Kidney (tissue), 22 donors: ENCODE measurements at regions of chr12 and their contacts with region 1.

Region 1: DNA sequence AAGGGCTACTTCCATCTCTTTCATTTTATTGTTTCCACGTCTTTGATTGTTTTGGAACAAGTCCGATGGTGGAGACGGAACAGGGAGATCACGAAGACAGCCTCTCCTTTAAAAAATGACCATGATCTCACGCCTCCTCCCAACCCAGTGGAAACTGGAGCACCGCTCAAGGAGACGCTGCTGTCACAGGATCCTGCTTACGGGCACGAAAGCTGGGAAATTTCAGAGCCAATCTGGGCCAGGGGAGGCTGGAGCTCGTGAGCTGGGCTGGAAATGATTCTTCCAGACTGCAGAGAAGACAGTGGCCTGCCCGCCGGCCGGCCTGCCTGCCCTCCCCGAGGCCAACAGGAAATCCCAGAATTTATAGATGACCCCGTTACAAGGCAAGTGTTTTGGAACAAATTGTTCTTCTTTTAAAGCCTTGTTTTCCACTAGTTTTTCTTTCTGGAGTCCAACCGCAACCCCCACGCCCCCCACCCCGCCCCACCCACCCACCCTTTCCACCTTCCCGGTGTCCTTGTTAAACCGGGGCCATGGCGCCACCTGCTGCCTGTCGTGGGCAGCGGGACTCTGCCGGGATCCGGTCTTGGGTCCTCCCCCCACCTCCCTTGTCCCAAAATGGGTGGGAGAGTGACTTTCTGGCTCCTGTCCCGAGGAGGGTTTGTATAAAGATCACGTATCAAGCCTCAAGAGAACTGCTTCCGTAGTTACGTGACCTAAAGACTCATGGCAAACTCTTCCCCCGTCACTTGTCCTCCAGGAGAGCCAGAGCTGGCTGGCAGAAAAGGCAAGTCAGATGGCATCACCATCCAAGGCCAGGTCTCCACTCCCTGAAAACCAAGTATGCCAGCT is 40.3 kb downstream of the MAP1LC3B2 start:
- DNase-seq: peak; percentile 79 to 93 (median 88)
- H3K4me3 ChIP-seq: peak overlapping the region; percentile 1 to 62 (median 51)
- H3K27ac ChIP-seq: peak overlapping the region; percentile 69 to 81
- H3K4me1 ChIP-seq: peaks cover 5 to 7% (median 6%) of the 10 kb centered on the region in 3 donors
- H3K27me3 ChIP-seq: no peaks in the 10 kb centered on the region
- CTCF ChIP-seq: peak; percentile 59

Region 2: GRCh38 chr12:115998119-115998633 is 601.3 kb before region 1 on chr12:
- intact Hi-C with region 1: loop called (anchors 10 kb)
- DNase-seq: peak in 3 of 5 donors; percentile 20 to 75 (median 49)
- H3K4me3 ChIP-seq: no peak overlapping the region
- H3K27ac ChIP-seq: no peak overlapping the region
- H3K4me1 ChIP-seq: peaks cover 0 to 2% (median 0%) of the 10 kb centered on the region in 3 donors
- H3K27me3 ChIP-seq: no peaks in the 10 kb centered on the region
- CTCF ChIP-seq: peak; percentile 49

Region 3: GRCh38 chr12:116277393-116278278 is 321.9 kb before region 1 on chr12 and contains the start of gene MED13L:
- intact Hi-C with region 1: loop called (anchors 10 kb)
- DNase-seq: peak; percentile 93 to 97 (median 96)
- H3K4me3 ChIP-seq: peak within 1 kb of the TSS; percentile 77 to 89 (median 88)
- H3K27ac ChIP-seq: peak within 1 kb of the TSS; percentile 80 to 81
- H3K4me1 ChIP-seq: peaks cover 4 to 15% (median 6%) of the 10 kb centered on the region in 3 donors
- H3K27me3 ChIP-seq: no peaks in the 10 kb centered on the region
- CTCF ChIP-seq: peak; percentile 46
- total RNA-seq, gene MED13L: 153 TPM

Region 4: GRCh38 chr12:116382686-116383531 is 216.6 kb before region 1 on chr12:
- intact Hi-C with region 1: no loop called
- DNase-seq: peak in 2 of 5 donors; percentile 74 to 81
- H3K4me3 ChIP-seq: no peak overlapping the region
- H3K27ac ChIP-seq: no peak overlapping the region
- H3K4me1 ChIP-seq: peaks cover 3 to 12% (median 7%) of the 10 kb centered on the region in 3 donors
- H3K27me3 ChIP-seq: no peaks in the 10 kb centered on the region
- CTCF ChIP-seq: no peak

Region 5: GRCh38 chr12:116466536-116466935 is 133.0 kb before region 1 on chr12:
- intact Hi-C with region 1: no loop called
- DNase-seq: peak in 2 of 5 donors; percentile 34 to 67
- H3K4me3 ChIP-seq: no peak overlapping the region
- H3K27ac ChIP-seq: no peak overlapping the region
- H3K4me1 ChIP-seq: peaks cover 0 to 2% (median 0%) of the 10 kb centered on the region in 3 donors
- H3K27me3 ChIP-seq: no peaks in the 10 kb centered on the region
- CTCF ChIP-seq: no peak